Heart right ventricle (tissue), 16 donors: ENCODE measurements at regions of chr4 and their contacts with region 1.

Region 1: DNA sequence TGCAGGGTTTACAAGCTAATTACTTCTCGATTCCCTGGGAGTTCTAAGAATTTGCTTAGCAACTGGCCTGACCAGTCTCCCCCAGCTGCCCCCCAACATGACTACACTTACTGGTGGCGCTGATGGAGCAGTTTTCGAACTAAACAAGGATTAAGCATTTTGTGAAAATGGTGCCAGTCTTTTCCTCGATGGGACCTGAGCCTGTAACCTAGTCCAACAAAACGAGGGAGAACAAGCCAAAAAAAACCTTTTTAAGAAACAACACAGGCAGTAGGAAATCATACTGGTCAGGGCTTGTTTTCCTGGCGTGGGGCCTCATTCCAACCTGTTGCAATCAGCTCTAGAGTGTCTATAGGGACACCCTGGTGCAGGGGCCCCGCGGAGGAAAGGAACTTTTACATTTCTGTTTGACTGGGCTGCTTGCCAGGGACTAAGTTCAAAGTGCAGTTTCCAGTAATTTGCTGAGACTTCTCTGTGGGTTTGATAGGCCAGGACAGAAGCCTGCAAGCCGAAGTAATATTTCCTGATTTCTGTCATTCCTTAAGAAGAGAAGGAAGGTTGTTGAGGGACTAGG is 158.7 kb downstream of the SPRY1 start:
- DNase-seq: peak; percentile 75 to 87
- ATAC-seq: peak; percentile 76 to 93 (median 90)
- H3K4me3 ChIP-seq: peak overlapping the region in 2 of 10 donors; percentile 3 to 12
- H3K27ac ChIP-seq: peak overlapping the region; percentile 0 to 79 (median 66)
- H3K4me1 ChIP-seq: peaks cover 0 to 43% (median 27%) of the 10 kb centered on the region in 9 donors
- H3K27me3 ChIP-seq: no peaks in the 10 kb centered on the region
- CTCF ChIP-seq: no peak

Region 2: GRCh38 chr4:123116412-123116811 is 438.9 kb before region 1 on chr4:
- intact Hi-C with region 1: loop called in 1 of 10 experiments (anchors 10 kb)
- DNase-seq: no peak
- ATAC-seq: no peak
- H3K4me3 ChIP-seq: no peak overlapping the region
- H3K27ac ChIP-seq: no peak overlapping the region
- H3K4me1 ChIP-seq: peaks cover 0 to 7% (median 0%) of the 10 kb centered on the region in 9 donors
- H3K27me3 ChIP-seq: no peaks in the 10 kb centered on the region
- CTCF ChIP-seq: no peak

Region 3: GRCh38 chr4:123380728-123381716 is 174.3 kb before region 1 on chr4:
- intact Hi-C with region 1: no loop called
- DNase-seq: no peak
- ATAC-seq: no peak
- H3K4me3 ChIP-seq: no peak overlapping the region
- H3K27ac ChIP-seq: no peak overlapping the region
- H3K4me1 ChIP-seq: peaks cover 0 to 4% (median 2%) of the 10 kb centered on the region in 9 donors
- H3K27me3 ChIP-seq: no peaks in the 10 kb centered on the region
- CTCF ChIP-seq: no peak

Region 4: DNA sequence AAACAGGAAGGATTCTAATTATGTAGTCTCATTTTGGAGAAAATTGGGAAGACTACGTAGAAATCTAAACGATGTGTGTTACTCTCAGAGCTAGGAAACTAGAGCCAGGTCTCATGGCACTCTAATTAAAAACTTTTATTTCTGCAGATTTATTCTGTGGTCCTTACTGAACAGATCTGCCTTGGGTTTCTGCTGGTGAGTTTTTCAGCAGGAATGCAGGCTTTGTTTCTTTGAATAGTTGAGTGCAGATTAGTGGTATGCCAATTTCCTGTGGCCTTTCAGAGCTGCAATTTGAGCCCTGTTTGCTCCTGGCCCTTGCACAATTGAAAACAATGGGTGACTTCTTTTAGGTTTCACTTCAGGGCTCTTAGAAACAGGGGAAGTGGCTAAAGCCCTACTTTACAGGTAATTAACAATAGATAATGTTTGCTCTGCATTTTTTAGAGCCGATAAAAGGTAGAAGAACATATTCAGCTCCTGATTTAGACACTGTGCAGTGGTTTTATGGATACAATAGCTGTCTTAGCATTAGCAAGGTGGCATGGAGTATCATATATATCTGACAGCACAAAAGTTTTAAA is 136.9 kb before region 1 on chr4:
- intact Hi-C with region 1: loop called in 1 of 10 experiments (anchors 10 kb)
- DNase-seq: peak in 1 of 2 donors; percentile 22
- ATAC-seq: peak in 7 of 8 donors; percentile 47 to 84 (median 75)
- H3K4me3 ChIP-seq: no peak overlapping the region
- H3K27ac ChIP-seq: peak overlapping the region in 8 of 10 donors; percentile 23 to 75 (median 48)
- H3K4me1 ChIP-seq: peaks cover 3 to 44% (median 15%) of the 10 kb centered on the region in 9 donors
- H3K27me3 ChIP-seq: no peaks in the 10 kb centered on the region
- CTCF ChIP-seq: no peak

Region 5: GRCh38 chr4:123438031-123438430 is 117.3 kb before region 1 on chr4:
- intact Hi-C with region 1: loop called in 1 of 10 experiments (anchors 10 kb)
- DNase-seq: no peak
- ATAC-seq: peak in 1 of 8 donors; percentile 12
- H3K4me3 ChIP-seq: no peak overlapping the region
- H3K27ac ChIP-seq: no peak overlapping the region
- H3K4me1 ChIP-seq: peaks cover 0 to 13% (median 4%) of the 10 kb centered on the region in 9 donors
- H3K27me3 ChIP-seq: no peaks in the 10 kb centered on the region
- CTCF ChIP-seq: no peak

Region 6: GRCh38 chr4:123488916-123489315 is 66.4 kb before region 1 on chr4:
- intact Hi-C with region 1: no loop called
- DNase-seq: no peak
- ATAC-seq: peak in 3 of 8 donors; percentile 24 to 67 (median 30)
- H3K4me3 ChIP-seq: no peak overlapping the region
- H3K27ac ChIP-seq: peak overlapping the region in 1 of 10 donors; percentile 26
- H3K4me1 ChIP-seq: peaks cover 0 to 5% (median 0%) of the 10 kb centered on the region in 9 donors
- H3K27me3 ChIP-seq: no peaks in the 10 kb centered on the region
- CTCF ChIP-seq: no peak

Region 7: DNA sequence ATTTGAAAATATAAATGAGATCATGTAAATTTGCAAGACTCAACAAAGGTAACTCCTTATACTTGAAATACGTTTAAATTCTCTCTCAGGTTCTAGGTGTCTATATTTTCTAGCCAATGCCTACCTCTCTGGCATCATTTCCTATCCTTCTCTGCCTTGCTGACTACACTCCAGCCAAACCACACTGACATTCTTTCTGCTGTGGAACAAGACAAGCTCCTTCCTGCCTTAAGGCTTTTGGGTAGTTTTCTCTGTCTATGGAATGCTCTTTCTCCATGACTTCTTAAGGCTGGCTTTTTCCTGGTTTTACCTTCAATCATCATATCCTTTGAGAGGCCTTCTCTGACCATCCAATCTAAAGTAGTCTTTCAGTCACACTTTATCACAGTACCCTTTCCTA is 42.3 kb after region 1 on chr4:
- intact Hi-C with region 1: no loop called
- DNase-seq: no peak
- ATAC-seq: no peak
- H3K4me3 ChIP-seq: no peak overlapping the region
- H3K27ac ChIP-seq: no peak overlapping the region
- H3K4me1 ChIP-seq: peaks cover 0 to 22% (median 18%) of the 10 kb centered on the region in 9 donors
- H3K27me3 ChIP-seq: no peaks in the 10 kb centered on the region
- CTCF ChIP-seq: no peak